HepG2 (cell line): ENCODE measurements at regions of chr2 and their contacts with region 1.

Region 1: DNA sequence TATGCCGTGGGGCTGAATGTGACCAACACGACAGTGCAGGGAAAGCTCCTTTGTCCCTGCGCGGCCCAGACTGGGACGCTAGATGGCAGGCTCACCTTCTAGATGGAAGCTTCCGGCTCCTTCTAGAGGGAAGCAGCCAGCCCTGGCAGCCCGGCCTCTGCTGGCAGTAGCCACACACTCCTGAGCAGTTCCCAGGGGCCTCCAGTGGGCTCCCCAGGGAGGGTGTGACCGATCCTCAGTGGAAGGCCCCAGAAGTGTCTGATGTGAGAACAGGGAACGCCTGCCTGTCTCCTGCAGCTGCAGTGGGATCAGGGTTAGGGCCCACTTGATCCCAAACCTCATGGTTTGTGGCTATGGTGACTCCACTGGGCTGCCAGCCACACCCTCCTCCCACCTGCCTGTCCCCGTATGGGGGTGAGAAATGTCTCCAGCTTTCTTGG is 48.5 kb upstream of the LRPPRC start:
- DNase-seq: peak; percentile 83
- ATAC-seq: peak; percentile 100
- H3K4me3 ChIP-seq: peak overlapping the region in 1 of 3 experiments; percentile 57; a peak in 1 of 6 replicates
- H3K27ac ChIP-seq: no peak overlapping the region
- H3K4me1 ChIP-seq: peaks cover 5% of the 10 kb centered on the region; the same call in 1 of the 2 replicates
- H3K27me3 ChIP-seq: peaks cover 0 to 11% of the 10 kb centered on the region in 2 experiments; a peak in 2 of 5 replicates
- CTCF ChIP-seq: peak; percentile 99
- EP300 ChIP-seq: no peak
- POLR2A ChIP-seq: no peak
- RAD21 ChIP-seq: peak; percentile 98

Region 2: GRCh38 chr2:44087036-44087713 is 42.9 kb after region 1 on chr2:
- CTCF ChIA-PET with region 1: interaction called, 3 read pairs
- POLR2A ChIA-PET with region 1: no interaction called
- in situ Hi-C with region 1: no loop called
- intact Hi-C with region 1: loop called (anchors 2 kb)
- DNase-seq: peak; percentile 72
- ATAC-seq: peak; percentile 91
- H3K4me3 ChIP-seq: peak overlapping the region; percentile 55 to 72 (median 61)
- H3K27ac ChIP-seq: no peak overlapping the region
- H3K4me1 ChIP-seq: peaks cover 44% of the 10 kb centered on the region
- H3K27me3 ChIP-seq: peaks cover 0 to 8% of the 10 kb centered on the region in 2 experiments; a peak in 2 of 5 replicates
- CTCF ChIP-seq: peak; percentile 98
- EP300 ChIP-seq: no peak
- POLR2A ChIP-seq: no peak
- RAD21 ChIP-seq: peak; percentile 94

Region 3: DNA sequence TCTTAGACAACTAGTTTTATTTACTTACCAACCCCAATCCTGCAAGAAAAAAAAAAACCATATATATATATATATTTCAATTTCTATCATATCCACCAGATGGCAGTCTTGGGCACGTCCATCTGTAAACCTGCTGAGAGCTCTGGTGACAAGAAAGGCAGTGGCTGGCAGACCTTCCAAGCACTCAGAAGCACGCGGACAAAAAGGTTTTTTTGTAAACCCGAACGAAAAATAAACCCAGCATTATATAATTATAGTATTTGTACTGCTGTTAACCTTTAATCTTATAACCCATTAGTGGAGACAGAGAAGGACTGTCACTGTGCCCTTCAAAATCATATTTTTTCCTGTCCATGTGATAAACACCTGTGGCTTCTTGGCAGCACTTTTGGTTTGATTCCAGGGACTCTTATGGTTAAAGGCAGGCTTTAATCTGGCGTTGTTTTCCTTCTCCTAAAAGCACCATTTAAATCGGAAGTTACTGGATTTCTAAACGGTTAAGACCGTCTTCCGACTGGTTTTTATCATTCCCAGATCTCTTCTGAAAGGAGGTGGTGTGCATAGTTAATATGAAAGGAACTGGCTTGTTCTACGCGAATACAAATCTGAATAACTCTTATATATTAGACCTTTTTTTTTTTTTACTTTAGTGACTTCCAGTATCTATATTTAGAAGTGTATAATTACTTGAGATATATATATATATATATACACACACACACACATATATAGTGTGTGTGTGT is 200.0 kb after region 1 on chr2:
- CTCF ChIA-PET with region 1: interaction called, 9 read pairs
- POLR2A ChIA-PET with region 1: no interaction called
- in situ Hi-C with region 1: no loop called
- intact Hi-C with region 1: loop called (anchors 1 kb)
- DNase-seq: peak; percentile 77
- ATAC-seq: peak; percentile 75
- H3K4me3 ChIP-seq: peak overlapping the region in 2 of 3 experiments; percentile 29 to 45; a peak in 3 of 6 replicates
- H3K27ac ChIP-seq: no peak overlapping the region
- H3K4me1 ChIP-seq: peaks cover 21% of the 10 kb centered on the region
- H3K27me3 ChIP-seq: no peaks in the 10 kb centered on the region
- CTCF ChIP-seq: peak; percentile 57
- EP300 ChIP-seq: no peak
- POLR2A ChIP-seq: no peak
- RAD21 ChIP-seq: 0 out of 2 replicates have a peak, but pooled peaks have one; percentile 25

Region 4: DNA sequence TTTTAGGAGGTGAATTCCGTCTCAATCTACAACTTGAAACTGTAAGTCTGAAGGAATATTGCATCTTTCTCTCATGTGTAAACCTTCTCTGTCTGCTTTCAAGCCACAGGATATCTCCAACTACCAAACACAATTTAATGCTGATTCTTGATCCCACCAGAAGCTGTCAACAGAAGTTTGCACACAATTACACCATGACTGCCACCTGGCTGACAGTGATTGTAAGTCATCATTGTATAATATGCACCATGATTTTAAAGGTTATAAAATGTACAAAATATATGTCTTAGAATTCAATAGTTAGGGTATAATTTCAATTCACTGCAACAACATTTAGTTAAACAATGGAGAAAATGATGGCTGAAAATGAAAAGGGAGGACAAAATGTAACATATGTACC is 298.6 kb after region 1 on chr2:
- CTCF ChIA-PET with region 1: interaction called, 14 read pairs
- POLR2A ChIA-PET with region 1: no interaction called
- in situ Hi-C with region 1: no loop called
- intact Hi-C with region 1: loop called (anchors 1 kb)
- DNase-seq: peak; percentile 51
- ATAC-seq: peak; percentile 68
- H3K4me3 ChIP-seq: no peak overlapping the region
- H3K27ac ChIP-seq: no peak overlapping the region
- H3K4me1 ChIP-seq: no peaks in the 10 kb centered on the region
- H3K27me3 ChIP-seq: no peaks in the 10 kb centered on the region
- CTCF ChIP-seq: peak; percentile 65
- EP300 ChIP-seq: no peak
- POLR2A ChIP-seq: no peak
- RAD21 ChIP-seq: peak; percentile 49; the same call in 1 of the 2 replicates

Region 5: DNA sequence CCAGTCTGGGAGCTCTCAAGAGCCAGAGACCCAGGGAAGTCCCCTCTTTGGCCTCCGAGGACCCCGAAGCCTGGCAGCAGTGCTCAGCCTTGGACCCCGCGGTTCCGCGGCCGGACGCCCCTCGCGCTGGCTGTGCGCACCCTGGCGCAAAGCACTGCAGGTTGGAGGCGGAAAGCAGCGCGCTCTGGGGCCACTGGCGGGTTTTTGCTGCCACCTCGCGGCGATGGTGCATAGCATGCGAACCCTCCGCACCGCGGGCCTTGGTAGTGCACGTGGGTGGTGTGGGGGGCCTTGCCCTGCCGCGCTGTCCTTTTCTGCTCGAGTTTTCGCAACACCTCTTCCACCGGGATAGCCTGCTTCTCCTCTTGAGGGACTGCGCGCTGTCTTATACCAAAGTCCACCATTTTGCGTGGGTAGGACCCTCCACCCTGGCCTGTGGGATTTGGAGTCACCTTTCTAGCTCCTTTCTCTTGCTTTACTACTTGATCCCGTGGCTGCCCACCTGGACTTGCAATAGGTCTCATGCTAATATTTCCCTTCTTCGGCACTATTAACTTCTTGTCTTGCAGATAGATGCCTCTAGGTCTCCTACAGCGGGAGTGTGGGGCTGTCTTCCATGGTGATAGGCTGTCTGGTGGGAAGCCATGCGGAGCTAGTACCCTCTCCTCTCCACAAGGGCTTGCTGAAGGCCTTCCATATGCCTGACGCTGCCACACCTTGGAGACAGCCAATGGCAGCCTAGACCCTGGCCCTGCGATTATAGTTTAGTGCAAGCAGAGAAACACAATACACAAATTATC is 911.5 kb after region 1 on chr2:
- CTCF ChIA-PET with region 1: no interaction called
- POLR2A ChIA-PET with region 1: no interaction called
- in situ Hi-C with region 1: loop called (anchors 10 kb)
- intact Hi-C with region 1: loop called (anchors 5 kb)
- DNase-seq: peak; percentile 50
- ATAC-seq: peak; percentile 83
- H3K4me3 ChIP-seq: peak overlapping the region in 1 of 3 experiments; percentile 63; a peak in 1 of 6 replicates
- H3K27ac ChIP-seq: no peak overlapping the region
- H3K4me1 ChIP-seq: peaks cover 32% of the 10 kb centered on the region
- H3K27me3 ChIP-seq: peaks cover 25 to 90% of the 10 kb centered on the region in 2 experiments; a peak in 4 of 5 replicates
- CTCF ChIP-seq: peak; percentile 99
- EP300 ChIP-seq: no peak
- POLR2A ChIP-seq: no peak
- RAD21 ChIP-seq: peak; percentile 97